Body of pancreas (tissue), 4 donors: ENCODE measurements at regions of chr21 and their contacts with region 1.

Region 1: GRCh38 chr21:17688912-17689874 is 76.5 kb upstream of the BTG3 start:
- DNase-seq: peak; percentile 18 to 37 (median 29)
- ATAC-seq: peak; percentile 27
- H3K4me3 ChIP-seq: no peak overlapping the region
- H3K27ac ChIP-seq: no peak overlapping the region
- H3K4me1 ChIP-seq: no peaks in the 10 kb centered on the region
- H3K27me3 ChIP-seq: no peaks in the 10 kb centered on the region
- CTCF ChIP-seq: no peak
- POLR2A ChIP-seq: no peak

Region 2: DNA sequence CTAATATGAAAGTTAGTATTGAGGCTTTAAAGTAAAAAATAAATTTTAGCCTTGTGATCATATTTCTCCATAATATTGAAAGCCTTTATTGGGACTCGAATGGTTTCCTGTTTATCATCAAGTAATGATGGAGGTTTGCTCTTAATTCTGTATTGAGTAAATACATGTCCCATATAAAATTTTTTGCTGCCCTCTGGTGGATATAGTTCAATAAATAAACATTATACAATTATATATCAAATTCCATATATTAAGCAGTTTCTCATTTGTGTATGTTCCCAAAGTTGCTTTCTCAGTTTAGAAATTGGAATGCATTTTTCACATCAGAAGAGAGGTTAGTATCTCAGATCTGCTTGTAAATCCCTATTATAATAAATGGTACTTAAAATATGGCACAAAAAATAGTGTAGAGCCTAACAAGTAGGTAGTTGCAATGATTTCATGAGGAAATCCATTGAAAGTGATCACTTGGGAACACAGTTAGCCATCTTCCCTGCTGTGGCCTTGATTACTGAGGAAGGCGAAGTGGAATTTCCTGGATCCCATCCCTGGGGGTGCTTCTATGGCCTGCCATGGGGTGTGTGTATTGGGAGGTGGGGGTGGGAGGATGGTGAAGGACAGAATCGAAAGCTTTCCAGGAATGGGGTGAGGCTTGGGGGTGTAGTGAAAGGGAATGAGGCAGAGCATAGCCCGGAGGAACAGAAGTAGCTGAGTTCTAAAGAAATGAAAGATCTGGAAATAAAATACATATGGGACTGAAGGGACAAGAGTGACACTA is 214.0 kb after region 1 on chr21:
- intact Hi-C with region 1: loop called (anchors 10 kb)
- DNase-seq: no peak
- ATAC-seq: no peak
- H3K4me3 ChIP-seq: no peak overlapping the region
- H3K27ac ChIP-seq: no peak overlapping the region
- H3K4me1 ChIP-seq: no peaks in the 10 kb centered on the region
- H3K27me3 ChIP-seq: no peaks in the 10 kb centered on the region
- CTCF ChIP-seq: peak in 4 of 7 experiments; percentile 7 to 31 (median 14)
- POLR2A ChIP-seq: no peak